ENCODE measurements at regions of chr1 and their contacts with region 1.

Region 1: GRCh38 chr1:193121616-193122593 is at the start of gene CDC73:
- H3K4me3 Mint-ChIP-seq: peak within 1 kb of the TSS; percentile 78
- H3K27ac Mint-ChIP-seq: peak within 1 kb of the TSS; percentile 94
- H3K4me1 Mint-ChIP-seq: peaks cover 43% of the 10 kb centered on the region
- H3K27me3 Mint-ChIP-seq: peaks cover 4% of the 10 kb centered on the region

Region 2: DNA sequence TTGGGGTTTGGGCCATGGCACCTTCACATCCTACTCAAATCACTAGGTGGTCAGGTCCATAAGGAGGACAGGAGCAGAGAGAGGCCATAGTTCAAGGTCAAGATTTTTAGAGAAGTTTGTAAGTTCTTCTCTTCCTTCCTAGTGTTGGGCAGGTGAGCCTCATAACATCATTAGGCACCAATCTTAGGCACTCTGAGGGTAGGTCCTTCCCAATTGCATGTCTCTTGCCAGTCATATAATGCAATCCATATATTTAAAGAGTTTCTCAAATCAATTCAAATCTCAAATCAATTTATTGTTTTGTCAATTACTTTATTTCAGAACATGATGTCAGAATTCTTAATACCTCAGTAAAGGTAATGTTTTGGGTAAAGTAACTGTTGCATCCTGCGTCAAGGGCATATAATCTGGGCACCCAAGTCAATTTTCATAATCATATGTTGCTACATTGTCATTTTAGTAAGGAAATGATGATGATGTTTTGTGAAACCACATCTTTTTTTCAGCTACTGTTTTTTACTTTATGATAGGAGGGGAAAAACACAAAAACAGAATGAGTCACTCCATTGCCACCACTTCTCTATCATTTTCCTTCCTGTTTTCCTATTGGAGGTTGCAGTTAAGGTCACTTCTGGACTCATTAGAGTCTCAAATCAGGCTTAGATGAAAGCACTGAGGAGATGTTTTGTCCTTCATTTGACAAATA is 185.4 kb before region 1 on chr1:
- intact Hi-C with region 1: loop called (anchors 5 kb)
- H3K4me3 Mint-ChIP-seq: no peak overlapping the region
- H3K27ac Mint-ChIP-seq: peak overlapping the region; percentile 66
- H3K4me1 Mint-ChIP-seq: peaks cover 34% of the 10 kb centered on the region
- H3K27me3 Mint-ChIP-seq: no peaks in the 10 kb centered on the region

Region 3: DNA sequence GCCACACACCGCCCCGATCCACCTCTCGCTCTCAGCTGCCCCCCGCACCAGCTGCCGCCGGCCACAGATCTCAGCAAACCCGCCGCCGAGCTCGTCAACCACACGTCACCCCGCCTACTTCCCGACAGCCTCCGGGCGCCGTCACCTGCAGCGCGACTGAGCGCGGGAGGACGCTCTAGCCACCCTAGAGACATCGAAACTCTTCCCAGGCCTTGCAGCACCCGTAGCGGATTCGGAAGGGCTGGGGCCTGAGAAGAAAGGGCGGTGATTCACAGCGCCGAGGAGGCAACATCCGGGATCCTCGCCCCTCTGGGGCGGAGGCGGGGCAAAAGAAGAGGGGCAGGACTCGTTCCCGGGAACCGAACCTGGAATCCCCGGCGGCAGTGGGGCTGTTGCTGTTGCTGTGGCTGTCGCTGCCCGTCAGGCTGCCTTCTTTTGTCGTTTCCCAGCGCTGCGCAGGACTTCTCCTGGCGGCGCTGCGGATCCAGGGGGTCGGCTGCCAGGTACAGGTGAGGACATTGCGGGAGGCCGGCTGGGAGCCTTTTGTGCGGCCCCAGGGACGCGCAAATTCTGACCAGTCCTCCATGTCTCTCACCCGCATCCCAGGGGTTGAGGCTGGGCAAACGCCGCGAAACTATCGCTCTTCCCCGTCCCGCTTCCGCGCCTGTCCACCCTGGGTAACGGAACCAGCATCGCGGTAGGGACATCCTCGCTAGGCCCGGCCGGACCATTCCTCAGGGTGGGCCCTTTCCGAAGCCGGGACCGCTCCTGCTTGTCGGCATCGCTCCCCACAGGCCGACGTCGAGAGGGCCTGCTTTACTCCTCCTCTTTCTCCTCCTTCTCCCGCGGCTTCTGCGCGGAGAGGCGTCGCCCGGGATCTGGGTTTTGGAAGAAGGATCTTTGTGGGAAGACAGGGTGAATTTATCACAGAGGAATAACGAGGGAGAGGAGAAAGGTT is 62.4 kb before region 1 on chr1 and contains the starts of genes RO60 and UCHL5:
- intact Hi-C with region 1: loop called (anchors 1 kb)
- H3K4me3 Mint-ChIP-seq: peak within 1 kb of the TSS; percentile 98
- H3K27ac Mint-ChIP-seq: peak within 1 kb of the TSS; percentile 97
- H3K4me1 Mint-ChIP-seq: peaks cover 39% of the 10 kb centered on the region
- H3K27me3 Mint-ChIP-seq: no peaks in the 10 kb centered on the region

Region 4: DNA sequence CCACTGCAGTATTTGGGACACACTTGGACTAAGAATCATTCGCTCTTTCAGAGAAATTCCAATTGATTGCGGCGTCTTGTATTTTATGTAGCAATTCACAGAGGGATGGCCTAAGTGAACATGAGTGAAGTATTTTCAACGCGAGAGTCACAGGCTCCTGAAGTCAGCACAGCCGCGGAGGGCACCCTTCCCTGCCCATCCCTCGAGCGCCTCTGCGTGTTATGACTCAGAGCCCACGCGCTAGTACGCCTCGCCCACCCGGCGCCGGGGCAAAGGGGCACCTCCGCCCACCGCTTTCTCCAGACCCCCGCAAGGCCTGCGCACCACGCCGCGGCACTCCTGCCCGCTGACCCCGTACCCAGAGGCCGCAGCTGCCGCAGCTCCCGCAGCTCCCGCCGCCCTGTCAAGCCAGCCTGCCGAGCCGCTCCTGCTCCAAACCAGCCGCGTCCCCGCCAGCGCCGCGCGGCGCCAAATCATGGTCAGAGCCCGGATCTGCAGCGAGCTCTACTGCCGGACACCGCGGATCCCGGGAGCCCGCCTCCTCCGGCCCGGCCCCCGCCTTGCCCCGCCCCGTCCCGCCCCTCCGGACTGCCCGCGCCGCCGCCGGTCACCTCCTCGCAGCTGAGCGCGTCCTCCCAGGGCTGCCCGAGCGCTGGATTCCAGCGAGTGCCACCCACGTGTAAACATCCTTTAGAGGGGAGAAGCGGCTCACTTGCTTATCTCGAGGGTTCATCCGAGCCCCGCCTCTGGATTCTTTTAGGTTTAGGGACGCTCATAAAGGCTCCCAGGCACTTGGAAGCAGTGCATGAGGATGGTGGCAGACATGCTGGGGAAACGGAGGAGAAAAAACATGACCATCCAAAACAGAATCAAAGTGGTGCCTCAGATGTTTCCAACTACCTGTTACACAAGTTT is 16.7 kb before region 1 on chr1 and contains the start of gene GLRX2:
- intact Hi-C with region 1: loop called (anchors 1 kb)
- H3K4me3 Mint-ChIP-seq: peak within 1 kb of the TSS; percentile 90
- H3K27ac Mint-ChIP-seq: peak within 1 kb of the TSS; percentile 93
- H3K4me1 Mint-ChIP-seq: peaks cover 24% of the 10 kb centered on the region
- H3K27me3 Mint-ChIP-seq: no peaks in the 10 kb centered on the region